BJ (cell line): ENCODE measurements at regions of chr4 and their contacts with region 1.

Region 1: DNA sequence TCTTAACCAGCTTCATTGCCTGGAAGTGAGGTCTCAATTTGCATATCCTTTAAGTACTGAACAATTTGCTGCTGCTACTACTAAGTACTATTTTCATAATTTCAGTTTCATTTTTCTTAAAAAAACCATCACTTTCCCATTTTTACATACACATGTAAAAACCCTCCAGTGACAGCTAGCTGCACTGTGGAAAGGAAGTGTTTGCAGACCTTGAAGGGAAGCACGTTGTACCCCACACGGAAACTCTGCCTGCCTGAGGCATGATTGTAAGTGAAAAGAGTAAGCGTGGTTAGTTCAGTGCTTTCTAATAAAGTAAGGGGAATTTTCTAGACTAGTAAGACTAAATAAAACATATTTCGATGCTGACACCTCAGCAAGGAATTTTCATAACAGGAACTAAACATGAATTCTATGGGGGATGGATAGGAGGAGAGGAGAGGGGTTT is 103.6 kb downstream of the RAPGEF2 start:
- DNase-seq: no peak
- H3K4me3 ChIP-seq: no peak overlapping the region
- H3K27me3 ChIP-seq: no peaks in the 10 kb centered on the region
- CTCF ChIP-seq: no peak

Region 2: DNA sequence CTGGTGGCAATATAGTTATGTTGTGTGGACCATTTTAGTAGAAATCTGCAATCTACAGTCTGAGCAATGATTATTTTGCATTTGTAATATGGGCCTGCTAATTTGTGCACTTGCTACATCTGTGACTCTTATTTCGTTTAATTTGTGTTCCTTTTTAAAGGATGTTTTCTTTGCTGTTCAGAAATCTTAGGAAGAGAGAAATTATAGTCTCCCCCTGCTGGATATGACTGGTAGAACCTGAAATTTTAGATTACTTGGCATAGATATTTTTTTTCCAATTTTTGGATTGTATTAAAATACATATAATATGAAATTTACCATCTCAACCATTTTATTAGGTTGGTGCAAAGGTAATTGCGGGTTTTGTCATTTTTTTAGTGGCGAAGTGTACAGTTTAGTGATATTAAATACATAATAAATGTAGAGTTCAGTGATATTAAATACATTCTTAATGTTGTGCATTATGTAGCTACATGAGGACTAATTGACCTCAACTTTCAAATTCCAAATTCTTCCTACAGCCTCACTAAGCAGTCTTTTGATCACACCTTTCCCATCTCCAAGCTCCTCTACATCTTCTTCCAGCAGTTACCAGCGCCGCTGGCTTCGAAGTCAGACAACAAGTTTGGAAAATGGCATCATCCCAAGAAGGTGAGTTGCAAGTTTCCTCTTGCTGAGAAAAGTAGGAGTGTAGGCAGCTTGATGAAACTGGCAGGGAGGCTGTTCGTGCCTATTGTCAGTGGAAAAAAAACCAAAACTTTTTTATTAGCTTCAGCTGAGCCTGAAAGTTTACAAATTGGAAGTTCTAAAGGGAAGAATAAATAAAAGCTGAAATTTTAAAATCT is 355.4 kb before region 1 on chr4:
- CTCF ChIA-PET with region 1: interaction called, 30 read pairs
- POLR2A ChIA-PET with region 1: no interaction called
- DNase-seq: no peak
- H3K4me3 ChIP-seq: no peak overlapping the region
- H3K27me3 ChIP-seq: no peaks in the 10 kb centered on the region
- CTCF ChIP-seq: peak; percentile 53

Region 3: DNA sequence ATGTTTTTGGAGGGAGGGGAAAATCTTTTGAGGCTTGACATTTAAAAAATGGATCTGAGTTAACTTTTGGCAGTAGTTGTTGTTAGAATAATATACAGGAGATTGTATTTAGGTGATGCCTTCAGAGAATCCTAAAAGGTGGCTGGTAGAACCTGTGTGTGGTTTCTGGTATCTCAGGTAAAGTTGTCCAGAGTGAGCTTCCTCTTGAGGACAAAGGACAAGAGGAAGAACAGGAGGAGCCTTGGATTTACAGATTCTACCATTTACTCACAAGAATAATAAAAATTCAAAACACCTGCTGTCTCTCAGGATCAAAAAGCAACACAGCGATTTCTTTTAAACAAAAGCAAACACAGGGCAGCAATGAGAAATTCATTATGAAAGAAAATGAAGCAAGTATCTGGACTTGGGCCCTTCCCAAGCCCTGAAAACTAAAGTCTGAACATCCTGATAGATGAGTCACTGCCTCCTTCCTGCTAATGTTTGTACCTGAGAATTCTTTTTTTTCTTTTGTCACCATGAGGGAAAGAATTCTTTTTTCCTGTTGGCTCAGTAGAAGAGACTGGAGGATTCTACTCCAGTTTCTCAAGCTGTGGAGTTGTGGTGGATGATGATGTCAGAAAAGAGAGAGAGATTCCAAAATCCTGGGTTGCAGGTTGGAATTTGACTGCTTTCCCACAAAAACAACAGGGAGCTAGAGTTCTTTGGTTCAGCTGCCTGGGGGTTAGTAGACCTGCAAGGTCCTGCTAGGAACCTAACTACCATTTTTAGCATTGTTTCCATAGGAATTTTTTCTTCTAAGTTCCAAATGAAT is 135.1 kb before region 1 on chr4:
- CTCF ChIA-PET with region 1: no interaction called
- POLR2A ChIA-PET with region 1: no interaction called
- DNase-seq: no peak
- H3K4me3 ChIP-seq: no peak overlapping the region
- H3K27me3 ChIP-seq: no peaks in the 10 kb centered on the region; the same call in 1 of the 2 replicates
- CTCF ChIP-seq: no peak

Region 4: DNA sequence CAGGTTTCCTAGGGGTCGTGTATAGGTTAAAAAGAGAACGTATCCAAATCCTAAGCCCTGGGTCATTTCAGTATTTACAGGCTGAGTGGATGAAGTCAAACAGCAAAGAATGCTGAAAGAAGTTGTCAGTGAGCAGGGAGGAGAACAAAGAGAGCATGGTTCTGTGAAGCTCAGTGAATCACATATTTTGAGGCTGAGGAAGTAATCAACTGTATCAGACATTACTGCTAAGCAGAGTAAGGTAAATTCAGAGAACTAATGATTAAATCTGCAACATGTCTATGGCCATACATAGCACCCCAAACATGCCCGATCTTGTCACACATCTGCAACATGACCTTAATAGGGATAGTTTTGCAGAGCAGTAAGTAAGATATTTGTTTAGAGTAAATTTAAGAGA is 1026.7 kb after region 1 on chr4:
- CTCF ChIA-PET with region 1: no interaction called
- POLR2A ChIA-PET with region 1: no interaction called
- DNase-seq: no peak
- H3K4me3 ChIP-seq: no peak overlapping the region
- H3K27me3 ChIP-seq: no peaks in the 10 kb centered on the region
- CTCF ChIP-seq: no peak